Stomach (tissue), 19 donors: ENCODE measurements at regions of chr20 and their contacts with region 1.

Region 1: DNA sequence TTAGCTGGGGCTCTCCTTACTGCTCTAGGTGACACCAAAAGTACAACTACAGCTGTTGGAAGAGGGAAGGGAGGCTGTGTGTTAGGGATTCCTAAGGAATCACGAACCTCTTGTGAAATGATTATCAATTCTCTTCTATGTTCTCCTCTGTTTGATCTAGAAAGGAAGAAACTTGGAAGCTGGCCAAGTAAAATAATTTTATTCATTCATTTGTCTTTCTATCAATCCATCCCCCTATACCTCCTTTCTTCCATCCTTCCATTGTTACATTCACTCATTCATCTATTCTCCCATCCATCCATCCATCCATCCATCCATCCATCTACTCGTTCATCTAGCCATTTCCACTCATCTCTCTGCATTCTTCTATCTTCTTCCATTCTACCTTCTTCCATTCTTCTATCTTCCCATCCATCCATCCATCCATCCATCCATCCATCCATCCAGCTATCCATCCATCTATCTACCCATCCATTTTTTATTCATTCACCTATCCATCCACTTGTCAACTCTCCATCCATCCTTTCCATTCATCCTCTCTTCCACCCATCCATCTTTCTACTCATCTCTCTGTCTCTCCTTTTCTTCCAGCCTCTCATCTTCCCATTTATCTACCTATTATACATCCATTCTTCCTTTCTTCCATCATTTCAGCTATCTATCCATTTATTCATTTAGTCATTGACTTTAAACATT is 52.8 kb upstream of the ZNFX1 start:
- DNase-seq: no peak
- H3K4me3 ChIP-seq: no peak overlapping the region
- H3K27ac ChIP-seq: no peak overlapping the region
- H3K4me1 ChIP-seq: peaks cover 0 to 13% (median 5%) of the 10 kb centered on the region in 4 donors
- H3K27me3 ChIP-seq: peaks cover 0 to 32% (median 4%) of the 10 kb centered on the region in 3 donors
- CTCF ChIP-seq: no peak
- EP300 ChIP-seq: no peak
- POLR2A ChIP-seq: no peak

Region 2: DNA sequence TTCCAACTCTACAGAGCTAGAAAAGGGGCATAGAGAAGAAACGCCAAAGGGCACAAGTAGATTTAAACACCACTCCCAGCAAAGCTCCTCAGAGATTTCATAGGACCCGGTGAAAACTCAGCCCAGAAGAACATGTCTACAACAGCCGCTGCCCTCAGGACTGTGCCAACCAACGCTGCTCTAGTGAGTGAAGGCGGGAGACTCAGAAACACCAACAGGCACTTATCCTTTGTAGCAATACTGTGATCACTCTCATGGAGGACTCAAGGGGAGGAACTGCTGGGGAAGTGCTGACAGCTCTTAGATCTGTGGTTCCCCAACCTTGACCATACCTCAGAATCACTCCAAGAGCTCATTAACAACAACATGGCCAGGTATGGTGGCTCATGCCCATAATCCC is 182.1 kb before region 1 on chr20:
- intact Hi-C with region 1: no loop called
- DNase-seq: no peak
- H3K4me3 ChIP-seq: no peak overlapping the region
- H3K27ac ChIP-seq: no peak overlapping the region
- H3K4me1 ChIP-seq: peaks cover 0 to 16% (median 4%) of the 10 kb centered on the region in 4 donors
- H3K27me3 ChIP-seq: no peaks in the 10 kb centered on the region
- CTCF ChIP-seq: no peak
- EP300 ChIP-seq: no peak
- POLR2A ChIP-seq: no peak

Region 3: DNA sequence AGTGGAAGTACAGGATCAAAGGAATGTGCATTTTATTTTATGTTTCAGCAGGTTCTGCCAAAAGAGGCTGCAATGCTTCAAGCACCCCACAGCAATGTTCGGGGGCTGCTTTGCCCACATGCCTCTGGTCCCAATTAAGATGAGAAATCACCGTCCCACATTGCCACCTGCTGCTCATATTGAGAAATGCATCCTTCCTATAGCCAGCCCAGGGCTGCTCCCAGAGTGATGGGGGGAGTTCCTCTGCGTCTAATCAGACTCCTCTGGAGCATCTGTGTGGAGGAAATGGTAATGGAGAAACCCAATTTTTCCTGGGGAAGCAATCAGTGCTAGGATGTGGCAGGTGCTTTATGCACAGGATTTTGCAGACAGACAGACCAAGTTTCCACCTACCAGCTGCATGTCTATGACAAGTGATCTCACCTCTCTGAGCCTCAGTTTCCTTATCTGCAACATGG is 203.6 kb after region 1 on chr20:
- intact Hi-C with region 1: loop called (anchors 5 kb)
- DNase-seq: peak; percentile 55 to 81
- H3K4me3 ChIP-seq: no peak overlapping the region
- H3K27ac ChIP-seq: no peak overlapping the region
- H3K4me1 ChIP-seq: peaks cover 0 to 7% (median 0%) of the 10 kb centered on the region in 4 donors
- H3K27me3 ChIP-seq: no peaks in the 10 kb centered on the region
- CTCF ChIP-seq: peak in 5 of 7 experiments; percentile 69 to 85 (median 79)
- EP300 ChIP-seq: no peak
- POLR2A ChIP-seq: no peak

Region 4: DNA sequence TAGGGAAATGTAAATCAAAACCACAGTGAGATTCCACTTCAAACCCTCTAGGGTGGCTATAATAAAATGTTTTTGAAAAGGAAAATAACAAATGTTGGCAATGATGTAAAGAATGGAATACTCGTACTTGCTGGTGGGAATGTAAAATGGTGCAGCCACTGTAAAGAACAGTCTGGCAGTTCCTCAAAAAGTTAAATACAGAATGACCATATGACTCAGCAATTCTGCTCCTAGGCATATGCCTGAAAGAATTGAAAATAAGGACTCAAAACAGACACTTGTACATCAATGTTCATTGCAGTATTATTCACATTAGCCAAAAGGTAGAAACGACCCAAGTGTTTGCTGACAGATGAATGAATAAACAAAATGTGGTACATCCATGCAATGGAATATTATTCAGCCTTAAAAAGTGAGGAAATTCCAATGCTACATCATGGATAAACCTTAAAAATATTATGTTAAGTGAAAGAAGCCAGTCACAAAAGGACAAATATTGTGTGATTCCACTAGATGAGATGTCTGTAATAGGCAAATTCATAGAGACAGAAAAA is 595.3 kb after region 1 on chr20:
- intact Hi-C with region 1: no loop called
- DNase-seq: no peak
- H3K4me3 ChIP-seq: no peak overlapping the region
- H3K27ac ChIP-seq: no peak overlapping the region
- H3K4me1 ChIP-seq: peaks cover 4 to 14% (median 11%) of the 10 kb centered on the region in 4 donors
- H3K27me3 ChIP-seq: no peaks in the 10 kb centered on the region
- CTCF ChIP-seq: no peak
- EP300 ChIP-seq: no peak
- POLR2A ChIP-seq: no peak